Naive thymus-derived CD4-positive, alpha-beta T cell (primary cell): ENCODE measurements at regions of chr6 and their contacts with region 1.

Region 1: GRCh38 chr6:35468181-35468979 is at the start of gene RPL10A:
- DNase-seq: peak; percentile 87 to 97 (median 94)
- ATAC-seq: peak; percentile 96
- H3K4me3 ChIP-seq: peak within 1 kb of the TSS; percentile 91
- H3K4me3 Mint-ChIP-seq: peak within 1 kb of the TSS; percentile 85 to 99 (median 98)
- H3K27ac ChIP-seq: peak within 1 kb of the TSS; percentile 83
- H3K27ac Mint-ChIP-seq: peak within 1 kb of the TSS; percentile 94 to 100 (median 99)
- H3K4me1 ChIP-seq: peaks cover 11 to 27% of the 10 kb centered on the region in 2 donors
- H3K4me1 Mint-ChIP-seq: peaks cover 25 to 49% (median 35%) of the 10 kb centered on the region in 7 donors
- H3K27me3 ChIP-seq: no peaks in the 10 kb centered on the region
- H3K27me3 Mint-ChIP-seq: no peaks in the 10 kb centered on the region
- total RNA-seq, gene RPL10A: 1,380 to 2,381 (median 2,302) TPM

Region 2: GRCh38 chr6:34887753-34888513 is 580.4 kb before region 1 on chr6 and contains the start of gene TAF11:
- CTCF ChIA-PET with region 1: no interaction called
- POLR2A ChIA-PET with region 1: no interaction called
- intact Hi-C with region 1: loop called in 1 of 2 experiments (anchors 1 kb)
- DNase-seq: peak; percentile 73 to 91 (median 88)
- ATAC-seq: peak; percentile 80
- H3K4me3 ChIP-seq: peak within 1 kb of the TSS; percentile 94
- H3K4me3 Mint-ChIP-seq: peak within 1 kb of the TSS; percentile 92 to 100 (median 100)
- H3K27ac ChIP-seq: peak within 1 kb of the TSS; percentile 95
- H3K27ac Mint-ChIP-seq: peak within 1 kb of the TSS; percentile 99 to 100 (median 100)
- H3K4me1 ChIP-seq: peaks cover 15 to 18% of the 10 kb centered on the region in 2 donors
- H3K4me1 Mint-ChIP-seq: peaks cover 41 to 71% (median 58%) of the 10 kb centered on the region in 7 donors
- H3K27me3 ChIP-seq: no peaks in the 10 kb centered on the region
- H3K27me3 Mint-ChIP-seq: peaks cover 0 to 16% (median 0%) of the 10 kb centered on the region in 5 donors
- total RNA-seq, gene TAF11: 25.4 to 35.1 (median 29.4) TPM

Region 3: DNA sequence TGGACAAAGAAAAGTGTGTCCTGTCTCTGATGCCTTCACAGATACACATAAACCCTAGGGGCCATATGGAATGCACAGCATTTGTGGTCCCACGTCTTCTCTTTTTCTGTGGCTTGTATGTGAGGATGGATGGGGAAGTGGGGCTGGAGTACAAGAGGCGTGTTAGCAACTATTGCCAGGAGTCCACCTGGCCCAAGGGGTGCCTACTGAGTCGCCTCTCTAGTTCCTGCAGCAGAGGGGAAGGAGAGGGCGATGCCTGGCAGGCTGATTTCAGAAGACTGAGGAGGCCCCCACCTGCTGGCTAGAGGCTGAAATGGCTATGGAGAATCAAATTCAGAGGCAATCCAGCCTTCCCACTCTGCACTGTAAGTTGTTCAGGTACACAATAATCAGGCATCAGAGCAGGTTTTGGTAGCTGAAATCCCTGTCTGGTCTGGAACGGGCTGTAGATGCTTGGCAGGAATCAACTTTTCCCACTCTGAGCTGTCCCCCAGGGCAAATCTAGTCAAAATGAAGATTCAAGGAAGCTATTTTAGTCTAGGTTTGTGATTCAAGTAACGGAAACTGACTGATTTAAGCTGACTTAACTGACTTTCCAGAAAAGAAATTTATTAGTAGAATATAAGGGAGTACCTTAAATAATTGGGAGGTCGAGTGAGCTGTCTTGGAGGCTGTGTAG is 140.9 kb before region 1 on chr6:
- CTCF ChIA-PET with region 1: interaction called, 12 read pairs
- POLR2A ChIA-PET with region 1: interaction called, 8 read pairs
- intact Hi-C with region 1: loop called in 1 of 2 experiments (anchors 1 kb)
- DNase-seq: peak in 8 of 9 donors; percentile 64 to 81 (median 76)
- ATAC-seq: peak; percentile 86
- H3K4me3 ChIP-seq: no peak overlapping the region
- H3K4me3 Mint-ChIP-seq: peak overlapping the region in 9 of 10 donors; percentile 1 to 70 (median 36)
- H3K27ac ChIP-seq: peak overlapping the region; percentile 34
- H3K27ac Mint-ChIP-seq: peak overlapping the region; percentile 65 to 96 (median 86)
- H3K4me1 ChIP-seq: peaks cover 11 to 16% of the 10 kb centered on the region in 2 donors
- H3K4me1 Mint-ChIP-seq: peaks cover 15 to 29% (median 23%) of the 10 kb centered on the region in 7 donors
- H3K27me3 ChIP-seq: no peaks in the 10 kb centered on the region
- H3K27me3 Mint-ChIP-seq: no peaks in the 10 kb centered on the region

Region 4: GRCh38 chr6:35351410-35351809 is 117.0 kb before region 1 on chr6:
- CTCF ChIA-PET with region 1: interaction called, 4 read pairs
- POLR2A ChIA-PET with region 1: interaction called, 10 read pairs
- intact Hi-C with region 1: no loop called
- DNase-seq: no peak
- ATAC-seq: no peak
- H3K4me3 ChIP-seq: no peak overlapping the region
- H3K4me3 Mint-ChIP-seq: peak overlapping the region in 4 of 10 donors; percentile 16 to 89 (median 26)
- H3K27ac ChIP-seq: no peak overlapping the region
- H3K27ac Mint-ChIP-seq: peak overlapping the region in 8 of 9 donors; percentile 83 to 98 (median 92)
- H3K4me1 ChIP-seq: peaks cover 11 to 37% of the 10 kb centered on the region in 2 donors
- H3K4me1 Mint-ChIP-seq: peaks cover 35 to 87% (median 74%) of the 10 kb centered on the region in 7 donors
- H3K27me3 ChIP-seq: no peaks in the 10 kb centered on the region
- H3K27me3 Mint-ChIP-seq: no peaks in the 10 kb centered on the region

Region 5: GRCh38 chr6:35452186-35453090 is 15.9 kb before region 1 on chr6 and contains the start of gene FANCE:
- CTCF ChIA-PET with region 1: interaction called, 81 read pairs
- POLR2A ChIA-PET with region 1: interaction called, 16 read pairs
- intact Hi-C with region 1: loop called (anchors 1 kb)
- DNase-seq: peak; percentile 62 to 99 (median 68)
- ATAC-seq: peak; percentile 94
- H3K4me3 ChIP-seq: peak within 1 kb of the TSS; percentile 63
- H3K4me3 Mint-ChIP-seq: peak within 1 kb of the TSS; percentile 74 to 91 (median 86)
- H3K27ac ChIP-seq: peak within 1 kb of the TSS; percentile 70
- H3K27ac Mint-ChIP-seq: peak within 1 kb of the TSS; percentile 53 to 92 (median 79)
- H3K4me1 ChIP-seq: peaks cover 8 to 11% of the 10 kb centered on the region in 2 donors
- H3K4me1 Mint-ChIP-seq: peaks cover 9 to 49% (median 42%) of the 10 kb centered on the region in 7 donors
- H3K27me3 ChIP-seq: no peaks in the 10 kb centered on the region
- H3K27me3 Mint-ChIP-seq: peaks cover 0 to 14% (median 0%) of the 10 kb centered on the region in 5 donors
- total RNA-seq, gene FANCE: 3.1 to 12.0 (median 6.4) TPM

Region 6: DNA sequence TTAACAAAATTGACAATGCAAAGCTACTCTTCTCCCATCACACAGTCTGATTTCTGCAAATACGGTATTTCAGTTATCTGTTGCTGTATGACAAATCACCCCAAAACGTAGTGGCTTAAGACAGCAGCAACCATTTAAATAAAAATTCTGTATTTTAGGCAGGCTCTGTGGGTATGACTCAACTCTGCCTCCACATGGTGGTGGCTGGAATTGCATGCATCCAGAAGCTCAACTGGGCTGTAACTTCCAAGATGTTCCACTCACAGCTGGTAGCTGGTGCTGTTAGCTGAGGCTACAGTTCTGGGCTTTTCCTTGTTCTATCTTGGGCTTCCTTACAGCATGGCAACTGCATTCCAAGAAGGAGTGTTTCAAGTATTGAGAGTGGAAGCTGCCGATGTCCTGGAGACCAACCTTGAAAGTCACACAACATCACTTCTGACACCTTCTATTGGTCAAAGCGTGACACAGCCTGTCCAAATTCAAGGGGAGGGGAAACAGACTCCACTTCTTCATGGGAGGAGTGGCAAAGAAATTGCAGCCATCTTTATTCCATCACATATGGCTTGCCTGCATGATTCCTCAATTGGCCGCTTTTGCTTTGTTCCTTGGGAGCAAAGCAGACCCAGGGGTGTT is 84.0 kb after region 1 on chr6:
- CTCF ChIA-PET with region 1: interaction called, 4 read pairs
- POLR2A ChIA-PET with region 1: interaction called, 3 read pairs
- intact Hi-C with region 1: loop called in 1 of 2 experiments (anchors 10 kb)
- DNase-seq: peak; percentile 36 to 69 (median 60)
- ATAC-seq: peak; percentile 84
- H3K4me3 ChIP-seq: no peak overlapping the region
- H3K4me3 Mint-ChIP-seq: no peak overlapping the region
- H3K27ac ChIP-seq: no peak overlapping the region
- H3K27ac Mint-ChIP-seq: peak overlapping the region in 1 of 9 donors; percentile 67
- H3K4me1 ChIP-seq: no peaks in the 10 kb centered on the region
- H3K4me1 Mint-ChIP-seq: peaks cover 0 to 8% (median 6%) of the 10 kb centered on the region in 7 donors
- H3K27me3 ChIP-seq: no peaks in the 10 kb centered on the region
- H3K27me3 Mint-ChIP-seq: peaks cover 0 to 17% (median 0%) of the 10 kb centered on the region in 5 donors

Region 7: GRCh38 chr6:35688581-35689322 is 220.4 kb after region 1 on chr6 and contains the start of gene FKBP5:
- CTCF ChIA-PET with region 1: no interaction called
- POLR2A ChIA-PET with region 1: no interaction called
- intact Hi-C with region 1: loop called in 1 of 2 experiments (anchors 5 kb)
- DNase-seq: peak; percentile 76 to 92 (median 82)
- ATAC-seq: peak; percentile 96
- H3K4me3 ChIP-seq: peak within 1 kb of the TSS; percentile 99
- H3K4me3 Mint-ChIP-seq: peak within 1 kb of the TSS; percentile 90 to 100 (median 97)
- H3K27ac ChIP-seq: peak within 1 kb of the TSS; percentile 92
- H3K27ac Mint-ChIP-seq: peak within 1 kb of the TSS; percentile 89 to 98 (median 95)
- H3K4me1 ChIP-seq: peaks cover 5 to 13% of the 10 kb centered on the region in 2 donors
- H3K4me1 Mint-ChIP-seq: peaks cover 6 to 18% (median 15%) of the 10 kb centered on the region in 7 donors
- H3K27me3 ChIP-seq: no peaks in the 10 kb centered on the region
- H3K27me3 Mint-ChIP-seq: no peaks in the 10 kb centered on the region
- total RNA-seq, gene FKBP5: 56.7 to 83.3 (median 79.4) TPM